ENCODE measurements at regions of chr16 and their contacts with region 1.

Region 1: DNA sequence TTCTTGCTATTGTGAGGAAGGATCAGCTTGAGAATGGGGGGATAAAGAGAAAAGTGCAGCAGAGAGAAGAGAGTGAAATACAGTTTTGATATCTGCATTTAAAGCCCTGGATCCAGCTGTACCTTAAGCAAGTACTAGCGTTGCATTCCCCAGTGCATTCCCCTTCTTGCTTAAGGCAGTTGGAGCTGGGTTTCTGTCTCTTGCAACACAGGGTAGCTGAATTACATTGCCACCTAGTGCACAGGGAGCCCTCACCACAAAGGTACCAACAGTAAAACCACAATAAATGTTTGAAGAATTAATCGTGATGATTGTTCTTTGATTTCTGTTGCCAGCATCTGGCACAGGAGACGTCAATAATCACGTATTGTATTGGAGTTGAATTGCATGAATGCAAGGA is 588.7 kb downstream of the RBFOX1 start:
- DNase-seq: no peak
- ATAC-seq: no peak
- H3K4me3 ChIP-seq: no peak overlapping the region
- H3K27ac ChIP-seq: no peak overlapping the region
- H3K4me1 ChIP-seq: no peaks in the 10 kb centered on the region
- H3K27me3 ChIP-seq: no peaks in the 10 kb centered on the region
- CTCF ChIP-seq: no peak
- EP300 ChIP-seq: no peak
- POLR2A ChIP-seq: no peak
- RAD21 ChIP-seq: no peak

Region 2: GRCh38 chr16:7772722-7773121 is 148.6 kb before region 1 on chr16:
- CTCF ChIA-PET with region 1: no interaction called
- POLR2A ChIA-PET with region 1: no interaction called
- RAD21 ChIA-PET with region 1: no interaction called
- SMC1A ChIA-PET with region 1: no interaction called
- in situ Hi-C with region 1: no loop called
- intact Hi-C with region 1: no loop called
- DNase-seq: no peak
- ATAC-seq: no peak
- H3K4me3 ChIP-seq: no peak overlapping the region
- H3K27ac ChIP-seq: no peak overlapping the region
- H3K4me1 ChIP-seq: no peaks in the 10 kb centered on the region
- H3K27me3 ChIP-seq: no peaks in the 10 kb centered on the region
- CTCF ChIP-seq: no peak
- EP300 ChIP-seq: no peak
- POLR2A ChIP-seq: no peak
- RAD21 ChIP-seq: no peak

Region 3: GRCh38 chr16:7805686-7806407 is 115.5 kb before region 1 on chr16:
- CTCF ChIA-PET with region 1: no interaction called
- POLR2A ChIA-PET with region 1: no interaction called
- RAD21 ChIA-PET with region 1: no interaction called
- SMC1A ChIA-PET with region 1: no interaction called
- in situ Hi-C with region 1: loop called (anchors 25 kb)
- intact Hi-C with region 1: no loop called
- DNase-seq: no peak
- ATAC-seq: no peak
- H3K4me3 ChIP-seq: no peak overlapping the region
- H3K27ac ChIP-seq: no peak overlapping the region
- H3K4me1 ChIP-seq: no peaks in the 10 kb centered on the region
- H3K27me3 ChIP-seq: no peaks in the 10 kb centered on the region
- CTCF ChIP-seq: no peak
- EP300 ChIP-seq: no peak
- POLR2A ChIP-seq: no peak
- RAD21 ChIP-seq: no peak

Region 4: DNA sequence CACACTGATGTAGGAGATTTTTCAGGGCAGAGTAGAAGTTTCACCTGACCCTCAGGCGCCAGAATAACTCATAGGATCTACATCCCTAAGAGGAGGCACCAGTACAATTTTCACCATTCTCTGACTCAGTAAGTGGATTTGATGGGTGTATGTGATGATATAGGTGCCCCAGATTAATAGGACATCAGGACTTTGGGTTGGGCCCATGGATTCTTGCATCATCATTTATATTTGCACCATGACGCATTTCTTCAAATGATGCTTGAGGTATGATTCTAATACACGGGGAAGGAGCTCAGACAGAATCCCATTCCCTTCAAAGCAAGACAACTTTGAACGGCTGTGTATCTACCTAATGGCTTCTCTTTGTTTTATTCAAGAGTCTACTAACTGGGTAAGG is 495.8 kb after region 1 on chr16:
- CTCF ChIA-PET with region 1: no interaction called
- POLR2A ChIA-PET with region 1: no interaction called
- RAD21 ChIA-PET with region 1: no interaction called
- SMC1A ChIA-PET with region 1: no interaction called
- in situ Hi-C with region 1: no loop called
- intact Hi-C with region 1: no loop called
- DNase-seq: no peak
- ATAC-seq: no peak
- H3K4me3 ChIP-seq: no peak overlapping the region
- H3K27ac ChIP-seq: no peak overlapping the region
- H3K4me1 ChIP-seq: no peaks in the 10 kb centered on the region
- H3K27me3 ChIP-seq: no peaks in the 10 kb centered on the region
- CTCF ChIP-seq: no peak
- EP300 ChIP-seq: no peak
- POLR2A ChIP-seq: no peak
- RAD21 ChIP-seq: no peak

Measured in GM12878 (cell line).